IMR-90 (cell line): ENCODE measurements at regions of chr15 and their contacts with region 1.

Region 1: DNA sequence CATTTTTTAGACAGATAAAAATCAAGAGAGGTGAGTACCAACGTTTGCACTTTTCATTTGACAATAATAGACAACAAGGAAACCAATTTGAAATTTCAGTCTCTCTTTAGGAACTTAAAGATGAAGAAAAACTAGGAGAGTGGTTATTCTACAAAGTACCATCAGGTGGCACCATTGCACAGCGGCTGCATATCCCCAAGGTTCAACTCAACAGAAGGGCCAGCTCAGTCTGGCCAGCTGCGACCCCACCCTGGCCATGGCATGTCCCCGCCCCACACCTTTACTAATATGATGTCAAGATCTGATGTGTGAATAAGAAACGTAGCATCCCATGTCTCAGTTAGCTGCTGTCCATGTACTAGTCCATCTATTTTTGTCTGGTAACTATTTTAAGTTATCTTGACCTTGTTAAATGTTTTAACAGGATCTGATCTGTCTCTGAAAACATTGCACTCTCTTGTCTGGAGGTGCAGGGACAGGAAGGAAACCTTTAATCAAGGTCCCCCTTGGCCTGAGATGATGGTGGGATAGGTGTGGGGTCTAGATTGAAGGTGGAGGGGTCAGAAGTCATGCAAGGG is 35.5 kb upstream of the CGNL1 start:
- DNase-seq: peak; percentile 65
- ATAC-seq: peak; percentile 91
- H3K4me3 ChIP-seq: no peak overlapping the region
- H3K27ac ChIP-seq: no peak overlapping the region
- H3K4me1 ChIP-seq: no peaks in the 10 kb centered on the region
- H3K27me3 ChIP-seq: peaks cover 2% of the 10 kb centered on the region; the same call in 1 of the 2 replicates
- CTCF ChIP-seq: peak; percentile 96
- POLR2A ChIP-seq: peak; percentile 47; the same call in 1 of the 2 replicates
- RAD21 ChIP-seq: peak; percentile 99

Region 2: DNA sequence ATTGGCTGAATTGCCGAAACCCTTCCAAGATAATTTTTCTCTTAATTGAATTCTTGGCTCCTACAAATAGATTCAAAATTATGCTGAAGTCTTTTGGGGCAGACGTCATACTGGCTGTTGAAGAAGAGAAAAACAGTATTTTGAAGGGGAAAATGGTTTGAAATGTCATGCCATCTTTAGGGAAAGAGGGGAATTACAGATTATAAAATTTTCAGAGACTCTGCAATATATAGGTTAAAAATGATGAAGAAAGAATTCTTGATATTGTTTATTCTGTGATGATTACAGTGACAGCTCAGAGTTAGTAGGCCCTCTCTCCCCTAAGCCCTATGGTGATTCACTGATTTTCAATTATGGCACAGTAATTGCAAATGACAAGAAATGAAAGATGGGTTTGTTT is 121.6 kb after region 1 on chr15:
- CTCF ChIA-PET with region 1: no interaction called
- POLR2A ChIA-PET with region 1: no interaction called
- dilution Hi-C with region 1: no loop called
- in situ Hi-C with region 1: no loop called
- intact Hi-C with region 1: loop called (anchors 5 kb)
- DNase-seq: peak; percentile 4
- ATAC-seq: peak; percentile 44; the same call in 1 of the 2 replicates
- H3K4me3 ChIP-seq: no peak overlapping the region
- H3K27ac ChIP-seq: no peak overlapping the region
- H3K4me1 ChIP-seq: no peaks in the 10 kb centered on the region
- H3K27me3 ChIP-seq: peaks cover 23% of the 10 kb centered on the region
- CTCF ChIP-seq: peak; percentile 27; the same call in 1 of the 2 replicates
- POLR2A ChIP-seq: no peak
- RAD21 ChIP-seq: peak; percentile 21; the same call in 1 of the 2 replicates

Region 3: DNA sequence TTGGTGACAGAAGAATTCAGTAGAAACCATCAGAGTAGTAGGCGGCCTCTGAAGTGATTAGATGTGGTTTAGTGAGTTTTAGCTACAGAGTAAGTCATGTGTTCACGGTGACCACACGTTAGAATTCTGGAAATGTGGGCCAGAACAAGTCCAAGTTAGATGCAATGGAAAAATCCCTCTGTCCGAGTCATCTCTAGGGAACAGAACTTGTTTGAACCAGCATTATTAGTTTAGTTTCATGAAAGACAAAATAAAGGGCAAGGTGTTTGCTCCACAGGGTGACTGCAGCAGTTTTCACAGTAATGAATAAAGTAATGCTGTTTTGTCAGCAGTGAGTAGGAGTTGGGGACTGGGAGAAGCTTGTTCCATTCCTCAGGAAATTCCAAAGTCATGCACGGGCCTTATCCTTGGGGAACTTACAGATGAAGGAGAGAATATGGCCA is 135.8 kb after region 1 on chr15:
- CTCF ChIA-PET with region 1: no interaction called
- POLR2A ChIA-PET with region 1: no interaction called
- dilution Hi-C with region 1: no loop called
- in situ Hi-C with region 1: no loop called
- intact Hi-C with region 1: no loop called
- DNase-seq: peak; percentile 70
- ATAC-seq: peak; percentile 72
- H3K4me3 ChIP-seq: no peak overlapping the region
- H3K27ac ChIP-seq: no peak overlapping the region
- H3K4me1 ChIP-seq: peaks cover 4% of the 10 kb centered on the region; the same call in 1 of the 2 replicates
- H3K27me3 ChIP-seq: peaks cover under 1% of the 10 kb centered on the region
- CTCF ChIP-seq: no peak
- POLR2A ChIP-seq: no peak
- RAD21 ChIP-seq: no peak

Region 4: GRCh38 chr15:57527382-57528091 is 186.8 kb after region 1 on chr15:
- CTCF ChIA-PET with region 1: interaction called, 74 read pairs
- POLR2A ChIA-PET with region 1: interaction called, 10 read pairs
- dilution Hi-C with region 1: loop called (anchors 25 kb)
- in situ Hi-C with region 1: loop called (anchors 5 kb)
- intact Hi-C with region 1: loop called (anchors 1 kb)
- DNase-seq: peak; percentile 88
- ATAC-seq: peak; percentile 83
- H3K4me3 ChIP-seq: no peak overlapping the region
- H3K27ac ChIP-seq: no peak overlapping the region
- H3K4me1 ChIP-seq: no peaks in the 10 kb centered on the region
- H3K27me3 ChIP-seq: peaks cover 39% of the 10 kb centered on the region
- CTCF ChIP-seq: peak; percentile 78
- POLR2A ChIP-seq: no peak
- RAD21 ChIP-seq: peak; percentile 92

Region 5: DNA sequence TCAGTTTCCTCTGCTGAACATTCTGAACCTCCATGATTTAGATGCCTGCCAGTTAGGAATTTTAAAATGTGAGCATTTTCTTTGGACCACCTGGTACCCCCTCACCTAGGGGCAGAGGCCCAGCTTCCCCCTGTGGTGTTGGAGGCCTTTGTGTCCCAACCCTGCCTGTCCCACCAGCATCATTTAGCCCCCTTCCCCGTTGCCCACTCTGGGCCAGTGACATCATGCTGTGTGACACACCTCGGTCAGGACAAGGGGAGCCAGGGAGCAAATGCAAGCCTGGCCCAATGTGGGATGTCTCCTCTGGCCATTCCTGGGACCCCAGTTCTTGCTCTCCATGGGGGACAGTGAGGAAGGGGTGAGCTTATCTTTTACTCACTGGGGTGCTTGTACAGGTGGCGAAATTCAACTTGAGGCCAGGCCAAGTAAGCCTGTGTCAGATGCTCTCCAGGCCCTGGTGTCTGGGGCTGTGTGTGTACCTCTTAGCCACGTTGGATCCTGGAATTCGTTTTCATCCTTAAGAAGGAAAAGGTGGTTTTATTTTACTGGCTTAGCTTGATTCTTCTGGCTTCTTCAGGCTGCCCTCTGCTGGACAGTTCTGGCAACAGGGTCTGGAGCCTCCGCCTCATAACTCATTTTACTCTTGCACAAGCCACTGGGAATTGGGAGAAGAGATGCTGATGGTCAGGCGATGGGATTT is 201.2 kb after region 1 on chr15:
- CTCF ChIA-PET with region 1: interaction called, 14 read pairs
- POLR2A ChIA-PET with region 1: no interaction called
- dilution Hi-C with region 1: loop called (anchors 25 kb)
- in situ Hi-C with region 1: no loop called
- intact Hi-C with region 1: loop called (anchors 1 kb)
- DNase-seq: peak; percentile 75
- ATAC-seq: peak; percentile 94
- H3K4me3 ChIP-seq: no peak overlapping the region
- H3K27ac ChIP-seq: no peak overlapping the region
- H3K4me1 ChIP-seq: no peaks in the 10 kb centered on the region
- H3K27me3 ChIP-seq: peaks cover 34% of the 10 kb centered on the region
- CTCF ChIP-seq: peak; percentile 90
- POLR2A ChIP-seq: no peak
- RAD21 ChIP-seq: peak; percentile 67

Region 6: DNA sequence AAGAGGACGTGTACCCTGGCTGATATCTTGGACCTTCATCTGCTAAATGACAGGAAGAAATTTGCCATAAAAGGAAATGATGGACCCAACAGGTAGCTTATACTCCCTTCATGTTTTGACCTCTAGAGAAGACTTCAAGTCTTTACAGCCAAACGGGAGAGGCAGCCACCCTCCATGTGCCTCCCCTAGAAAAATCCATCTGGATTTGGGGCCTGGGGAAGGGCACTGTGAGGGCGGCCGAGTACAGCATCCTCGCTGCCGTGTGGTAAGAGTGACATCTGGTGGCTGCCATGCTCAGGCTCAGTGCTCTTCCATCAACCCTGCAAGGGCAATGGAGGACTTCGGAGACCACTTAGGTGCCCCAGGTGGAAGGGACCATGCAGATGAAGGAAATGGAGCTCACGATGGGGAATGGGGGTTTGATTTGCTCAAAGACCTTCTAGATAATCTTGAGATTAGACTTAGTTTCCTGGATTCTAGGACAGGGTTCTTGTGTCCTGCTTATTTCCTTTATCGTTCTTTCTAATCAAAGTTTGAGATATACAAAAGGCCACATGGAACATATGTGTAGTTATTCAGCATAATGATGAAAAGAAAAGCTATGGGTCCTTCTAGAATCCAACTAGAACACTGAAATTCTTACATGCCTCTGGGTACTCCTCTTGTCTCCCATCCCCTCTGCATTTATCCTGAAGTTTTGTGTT is 841.8 kb after region 1 on chr15:
- CTCF ChIA-PET with region 1: no interaction called
- POLR2A ChIA-PET with region 1: no interaction called
- dilution Hi-C with region 1: no loop called
- in situ Hi-C with region 1: no loop called
- intact Hi-C with region 1: loop called (anchors 5 kb)
- DNase-seq: peak; percentile 41
- ATAC-seq: peak; percentile 98
- H3K4me3 ChIP-seq: no peak overlapping the region
- H3K27ac ChIP-seq: no peak overlapping the region
- H3K4me1 ChIP-seq: no peaks in the 10 kb centered on the region
- H3K27me3 ChIP-seq: peaks cover 15% of the 10 kb centered on the region
- CTCF ChIP-seq: peak; percentile 74
- POLR2A ChIP-seq: no peak
- RAD21 ChIP-seq: peak; percentile 83